ENCODE measurements at regions of chr14 and their contacts with region 1.

Region 1: GRCh38 chr14:103518422-103519042 is 4.1 kb downstream of the CKB start:
- DNase-seq: peak; percentile 30
- H3K4me3 ChIP-seq: no peak overlapping the region
- H3K27ac ChIP-seq: no peak overlapping the region
- H3K4me1 ChIP-seq: peaks cover 37% of the 10 kb centered on the region
- H3K27me3 ChIP-seq: peaks cover 19% of the 10 kb centered on the region
- CTCF ChIP-seq: peak; percentile 85 to 97

Region 2: DNA sequence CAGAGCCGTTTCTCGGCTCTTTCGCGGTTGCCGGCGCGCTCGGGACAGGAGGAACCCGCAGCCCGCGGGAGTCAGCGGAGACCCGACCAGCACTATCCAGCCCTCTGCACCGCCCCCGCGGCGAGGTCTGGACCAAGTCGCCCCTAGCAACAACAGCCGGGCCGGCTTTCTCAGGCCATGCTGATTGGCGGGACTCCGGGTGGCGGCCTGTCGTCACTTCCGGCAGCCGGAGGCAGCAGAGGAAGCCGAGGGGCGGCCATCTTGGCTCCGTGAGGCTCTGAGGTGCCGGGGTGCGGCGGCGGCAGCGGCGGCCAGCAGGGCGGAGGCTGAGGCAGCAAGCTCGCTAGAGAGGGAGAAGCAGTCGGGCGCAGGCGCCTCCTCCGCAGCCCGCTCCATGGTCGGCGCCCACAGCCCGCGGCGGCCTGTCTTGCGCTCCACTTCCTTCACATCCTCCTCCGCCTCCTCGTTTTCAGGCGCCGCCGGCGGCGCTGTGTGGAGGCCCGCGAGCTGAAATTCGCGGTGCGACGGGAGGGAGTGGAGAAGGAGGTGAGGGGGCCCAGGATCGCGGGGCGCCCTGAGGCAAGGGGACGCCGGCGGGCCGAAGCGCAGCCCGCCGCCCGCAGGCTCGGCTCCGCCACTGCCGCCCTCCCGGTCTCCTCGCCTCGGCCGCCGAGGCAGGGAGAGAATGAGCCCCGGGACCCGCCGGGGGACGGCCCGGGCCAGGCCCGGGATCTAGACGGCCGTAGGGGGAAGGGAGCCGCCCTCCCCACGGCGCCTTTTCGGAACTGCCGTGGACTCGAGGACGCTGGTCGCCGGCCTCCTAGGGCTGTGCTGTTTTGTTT is 133.2 kb before region 1 on chr14 and contains the start of gene MARK3:
- CTCF ChIA-PET with region 1: no interaction called
- dilution Hi-C with region 1: no loop called
- in situ Hi-C with region 1: no loop called
- intact Hi-C with region 1: no loop called
- DNase-seq: peak; percentile 97
- H3K4me3 ChIP-seq: peak within 1 kb of the TSS; percentile 71 to 99 (median 93)
- H3K27ac ChIP-seq: peak within 1 kb of the TSS; percentile 75
- H3K4me1 ChIP-seq: peaks cover 24% of the 10 kb centered on the region
- H3K27me3 ChIP-seq: no peaks in the 10 kb centered on the region
- CTCF ChIP-seq: peak in 1 of 2 donors; percentile 2
- total RNA-seq, gene MARK3: 85.7 to 175 TPM

Region 3: GRCh38 chr14:103546652-103547454 is 28.3 kb after region 1 on chr14:
- CTCF ChIA-PET with region 1: interaction called, 3 read pairs
- dilution Hi-C with region 1: loop called (anchors 5 kb)
- in situ Hi-C with region 1: no loop called
- intact Hi-C with region 1: loop called (anchors 1 kb)
- DNase-seq: peak; percentile 46
- H3K4me3 ChIP-seq: no peak overlapping the region
- H3K27ac ChIP-seq: no peak overlapping the region
- H3K4me1 ChIP-seq: peaks cover 36% of the 10 kb centered on the region
- H3K27me3 ChIP-seq: no peaks in the 10 kb centered on the region
- CTCF ChIP-seq: peak; percentile 70 to 86